ENCODE measurements at regions of chr19 and their contacts with region 1.

Region 1: GRCh38 chr19:18846862-18847548 is 15.2 kb downstream of the UPF1 start:
- DNase-seq: peak; percentile 77
- ATAC-seq: peak; percentile 82
- H3K4me3 Mint-ChIP-seq: no peak overlapping the region
- H3K27ac Mint-ChIP-seq: peak overlapping the region; percentile 18
- H3K4me1 Mint-ChIP-seq: peaks cover 77% of the 10 kb centered on the region
- H3K27me3 Mint-ChIP-seq: no peaks in the 10 kb centered on the region

Region 2: GRCh38 chr19:18831524-18832305 is 15.3 kb before region 1 on chr19 and contains the start of gene UPF1:
- CTCF ChIA-PET with region 1: interaction called, 58 read pairs
- DNase-seq: peak; percentile 97
- ATAC-seq: peak; percentile 88
- H3K4me3 Mint-ChIP-seq: peak within 1 kb of the TSS; percentile 95
- H3K27ac Mint-ChIP-seq: peak within 1 kb of the TSS; percentile 86
- H3K4me1 Mint-ChIP-seq: peaks cover 38% of the 10 kb centered on the region
- H3K27me3 Mint-ChIP-seq: peaks cover 13% of the 10 kb centered on the region
- total RNA-seq, gene UPF1: 98.4 to 98.7 TPM

Region 3: DNA sequence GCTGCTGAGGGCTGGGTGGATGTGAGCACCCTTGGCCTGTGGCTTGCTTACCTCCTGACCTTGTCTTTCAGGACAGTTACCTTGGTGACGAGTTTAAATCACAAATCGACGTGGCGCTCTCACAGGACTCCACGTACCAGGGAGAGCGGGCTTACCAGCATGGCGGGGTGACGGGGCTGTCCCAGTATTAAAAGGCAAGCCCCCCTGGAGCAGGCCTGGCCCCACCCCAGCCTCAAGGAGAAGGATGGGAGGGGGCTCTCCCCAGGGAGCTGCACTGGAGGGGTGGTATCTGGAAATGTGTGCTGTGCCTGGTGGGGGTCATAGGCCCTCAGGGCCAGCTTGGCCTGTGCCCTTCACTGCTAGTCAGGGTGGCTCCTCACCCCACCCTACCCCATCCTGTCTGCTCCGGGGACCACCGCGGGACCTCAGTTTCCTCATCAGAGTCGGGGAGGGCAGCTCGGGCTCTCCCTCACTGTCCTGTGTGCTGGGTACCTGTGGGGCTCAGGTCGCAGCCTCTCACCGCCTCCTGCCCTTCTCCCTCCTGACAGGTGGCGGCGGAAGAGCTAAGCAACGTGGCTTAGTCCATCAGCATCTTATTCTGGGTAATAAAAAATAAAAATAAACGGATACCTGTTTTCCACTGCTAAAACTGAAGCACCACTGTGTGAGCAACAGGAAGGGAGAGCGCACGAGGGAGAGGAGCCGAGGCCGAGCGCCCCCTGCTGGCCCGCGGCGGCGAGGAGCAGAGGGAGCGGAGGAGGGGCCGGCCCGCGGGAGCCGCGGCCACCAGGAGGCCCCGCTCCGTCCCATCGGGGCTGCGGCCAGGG is 19.2 kb after region 1 on chr19:
- CTCF ChIA-PET with region 1: interaction called, 12 read pairs
- DNase-seq: peak; percentile 64
- ATAC-seq: peak; percentile 84
- H3K4me3 Mint-ChIP-seq: no peak overlapping the region
- H3K27ac Mint-ChIP-seq: no peak overlapping the region
- H3K4me1 Mint-ChIP-seq: no peaks in the 10 kb centered on the region
- H3K27me3 Mint-ChIP-seq: peaks cover 4% of the 10 kb centered on the region